ENCODE measurements at regions of chr1 and their contacts with region 1.

Region 1: DNA sequence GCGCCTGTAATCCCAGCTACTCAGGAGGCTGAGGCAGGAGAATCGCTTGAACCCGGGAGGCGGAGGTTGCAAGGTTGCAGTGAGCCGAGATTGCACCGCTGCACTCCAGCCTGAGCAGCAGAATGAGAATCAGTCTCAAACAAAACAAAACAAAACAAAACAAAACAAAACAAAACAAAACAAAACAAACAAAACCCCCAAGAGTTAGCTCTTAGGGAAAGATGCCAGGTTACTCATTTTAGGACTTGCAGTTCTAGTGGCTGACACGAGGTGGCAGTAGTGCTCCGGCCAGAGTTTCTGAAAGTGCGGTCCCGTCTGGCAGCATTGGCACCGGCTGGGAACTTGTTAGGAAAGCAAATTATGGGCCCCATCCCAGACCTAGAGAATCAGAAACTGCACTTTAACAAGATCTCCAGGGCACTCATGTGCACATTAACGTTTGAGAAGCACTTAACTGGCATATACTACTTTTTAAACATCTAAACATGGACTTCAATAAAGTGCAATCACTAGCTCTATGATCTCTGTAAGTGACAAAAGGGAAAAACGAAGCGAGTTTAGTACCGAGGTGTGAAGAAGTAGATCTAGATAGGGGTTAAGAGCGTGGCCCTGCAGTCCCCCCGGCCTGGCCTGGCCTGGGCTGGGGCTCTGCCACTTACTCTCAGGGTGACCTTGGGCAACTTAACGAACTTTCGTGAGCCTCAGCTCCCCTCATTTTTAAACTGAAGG is 41.9 kb upstream of the TNFRSF1B start:
- DNase-seq: peak; percentile 85
- H3K4me3 Mint-ChIP-seq: no peak overlapping the region
- H3K27ac Mint-ChIP-seq: peak overlapping the region; percentile 65
- H3K4me1 Mint-ChIP-seq: peaks cover 51% of the 10 kb centered on the region
- H3K27me3 Mint-ChIP-seq: peaks cover 26% of the 10 kb centered on the region

Region 2: GRCh38 chr1:12019858-12020509 is 104.9 kb before region 1 on chr1:
- CTCF ChIA-PET with region 1: no interaction called
- DNase-seq: no peak
- H3K4me3 Mint-ChIP-seq: peak overlapping the region; percentile 78
- H3K27ac Mint-ChIP-seq: peak overlapping the region; percentile 81
- H3K4me1 Mint-ChIP-seq: peaks cover 24% of the 10 kb centered on the region
- H3K27me3 Mint-ChIP-seq: no peaks in the 10 kb centered on the region

Region 3: GRCh38 chr1:12113433-12114339 is 11.2 kb before region 1 on chr1:
- CTCF ChIA-PET with region 1: interaction called, 11 read pairs
- DNase-seq: peak; percentile 39
- H3K4me3 Mint-ChIP-seq: no peak overlapping the region
- H3K27ac Mint-ChIP-seq: peak overlapping the region; percentile 50
- H3K4me1 Mint-ChIP-seq: peaks cover 19% of the 10 kb centered on the region
- H3K27me3 Mint-ChIP-seq: peaks cover 8% of the 10 kb centered on the region

Region 4: GRCh38 chr1:12161662-12162458 is 37.0 kb after region 1 on chr1:
- CTCF ChIA-PET with region 1: interaction called, 16 read pairs
- DNase-seq: peak; percentile 85
- H3K4me3 Mint-ChIP-seq: peak overlapping the region; percentile 35
- H3K27ac Mint-ChIP-seq: peak overlapping the region; percentile 95
- H3K4me1 Mint-ChIP-seq: peaks cover 93% of the 10 kb centered on the region
- H3K27me3 Mint-ChIP-seq: no peaks in the 10 kb centered on the region

Region 5: DNA sequence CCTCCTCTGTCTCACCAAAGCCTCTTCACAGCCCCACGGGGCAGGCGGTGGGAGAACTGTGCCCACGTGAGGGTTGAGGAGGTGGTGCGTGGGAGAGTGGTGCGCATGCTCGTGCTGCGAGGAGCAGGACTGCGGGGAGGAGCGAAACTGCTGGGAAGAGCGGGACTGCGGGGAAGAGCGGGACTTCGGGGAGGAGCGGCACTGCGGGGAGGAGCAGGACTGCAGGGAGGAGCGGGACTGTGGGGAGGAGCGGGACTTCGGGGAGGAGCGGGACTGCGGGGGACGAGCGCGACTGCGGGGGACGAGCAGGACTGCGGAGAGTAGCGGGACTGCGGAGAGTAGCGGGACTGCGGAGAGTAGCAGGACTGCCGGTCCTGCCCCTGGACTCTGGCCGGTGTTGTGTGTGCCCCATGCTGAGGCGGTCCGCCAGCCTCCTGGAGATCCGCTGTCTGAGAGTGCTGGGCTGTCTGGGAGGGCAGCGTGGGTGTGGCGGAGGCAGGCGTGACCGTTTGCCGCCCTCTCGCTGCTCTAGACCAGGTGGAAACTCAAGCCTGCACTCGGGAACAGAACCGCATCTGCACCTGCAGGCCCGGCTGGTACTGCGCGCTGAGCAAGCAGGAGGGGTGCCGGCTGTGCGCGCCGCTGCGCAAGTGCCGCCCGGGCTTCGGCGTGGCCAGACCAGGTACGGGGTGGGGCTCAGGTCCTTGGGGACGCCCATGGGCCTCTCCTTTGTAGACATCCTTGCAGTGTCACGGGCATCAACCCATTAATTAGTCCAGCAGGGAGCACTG is 66.6 kb after region 1 on chr1:
- CTCF ChIA-PET with region 1: interaction called, 45 read pairs
- DNase-seq: no peak
- H3K4me3 Mint-ChIP-seq: no peak overlapping the region
- H3K27ac Mint-ChIP-seq: peak overlapping the region; percentile 60
- H3K4me1 Mint-ChIP-seq: peaks cover 48% of the 10 kb centered on the region
- H3K27me3 Mint-ChIP-seq: no peaks in the 10 kb centered on the region

Region 6: GRCh38 chr1:12215118-12215961 is 90.5 kb after region 1 on chr1:
- CTCF ChIA-PET with region 1: interaction called, 252 read pairs
- DNase-seq: no peak
- H3K4me3 Mint-ChIP-seq: no peak overlapping the region
- H3K27ac Mint-ChIP-seq: no peak overlapping the region
- H3K4me1 Mint-ChIP-seq: peaks cover 19% of the 10 kb centered on the region
- H3K27me3 Mint-ChIP-seq: peaks cover 68% of the 10 kb centered on the region

Region 7: GRCh38 chr1:12244078-12244477 is 119.2 kb after region 1 on chr1:
- CTCF ChIA-PET with region 1: interaction called, 36 read pairs
- DNase-seq: peak; percentile 38
- H3K4me3 Mint-ChIP-seq: no peak overlapping the region
- H3K27ac Mint-ChIP-seq: no peak overlapping the region
- H3K4me1 Mint-ChIP-seq: no peaks in the 10 kb centered on the region
- H3K27me3 Mint-ChIP-seq: no peaks in the 10 kb centered on the region